ENCODE measurements at regions of chr17 and their contacts with region 1.

Region 1: GRCh38 chr17:72556944-72557826 is 436.4 kb downstream of the SOX9 start:
- DNase-seq: no peak
- H3K4me3 ChIP-seq: no peak overlapping the region
- CTCF ChIP-seq: peak; percentile 84

Region 2: GRCh38 chr17:70767102-70767701 is 1790.0 kb before region 1 on chr17:
- CTCF ChIA-PET with region 1: interaction called, 16 read pairs
- POLR2A ChIA-PET with region 1: no interaction called
- DNase-seq: no peak
- H3K4me3 ChIP-seq: no peak overlapping the region
- CTCF ChIP-seq: peak; percentile 36

Region 3: GRCh38 chr17:72580321-72581127 is 23.3 kb after region 1 on chr17:
- CTCF ChIA-PET with region 1: interaction called, 78 read pairs
- POLR2A ChIA-PET with region 1: no interaction called
- DNase-seq: no peak
- H3K4me3 ChIP-seq: no peak overlapping the region
- CTCF ChIP-seq: no peak

Region 4: GRCh38 chr17:72614871-72615626 is 57.9 kb after region 1 on chr17:
- CTCF ChIA-PET with region 1: interaction called, 10 read pairs
- POLR2A ChIA-PET with region 1: no interaction called
- DNase-seq: no peak
- H3K4me3 ChIP-seq: no peak overlapping the region
- CTCF ChIP-seq: no peak

Region 5: GRCh38 chr17:72699545-72699944 is 142.4 kb after region 1 on chr17:
- CTCF ChIA-PET with region 1: interaction called, 18 read pairs
- POLR2A ChIA-PET with region 1: no interaction called
- DNase-seq: no peak
- H3K4me3 ChIP-seq: no peak overlapping the region
- CTCF ChIP-seq: no peak

Region 6: DNA sequence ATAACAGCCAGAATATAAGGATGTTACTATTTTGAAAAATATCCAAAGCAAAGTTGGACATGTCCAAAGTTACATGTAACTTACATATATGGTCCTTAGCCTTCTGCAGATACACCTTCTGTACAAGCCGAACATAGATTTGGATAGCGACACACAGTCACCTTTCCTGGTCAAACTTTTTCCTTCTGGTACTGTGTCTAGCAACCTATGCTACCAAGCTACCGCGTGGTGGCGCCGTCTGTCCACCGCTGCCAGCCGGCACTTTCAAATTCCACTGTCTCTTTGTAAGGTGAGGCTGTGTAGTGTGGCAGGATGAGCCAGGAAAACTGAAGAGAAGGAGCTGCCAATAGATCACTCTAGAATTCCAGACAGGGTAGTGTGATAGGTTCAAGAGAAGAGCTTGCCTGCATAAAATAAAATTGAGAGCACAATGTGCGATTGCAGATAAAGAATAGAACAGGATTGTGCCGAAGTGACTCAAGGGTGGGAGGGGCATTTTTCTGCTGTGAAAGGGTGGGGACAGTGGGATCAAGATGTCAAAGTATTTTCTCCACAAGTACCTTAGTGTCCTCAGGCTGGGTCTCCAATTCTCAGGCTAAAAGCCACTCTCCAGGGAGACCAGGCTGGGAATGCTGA is 168.4 kb after region 1 on chr17:
- CTCF ChIA-PET with region 1: interaction called, 350 read pairs
- POLR2A ChIA-PET with region 1: no interaction called
- DNase-seq: no peak
- H3K4me3 ChIP-seq: no peak overlapping the region
- CTCF ChIP-seq: peak; percentile 90

Region 7: GRCh38 chr17:72839131-72839725 is 282.0 kb after region 1 on chr17:
- CTCF ChIA-PET with region 1: no interaction called
- POLR2A ChIA-PET with region 1: no interaction called
- DNase-seq: no peak
- H3K4me3 ChIP-seq: no peak overlapping the region
- CTCF ChIP-seq: no peak

Region 8: DNA sequence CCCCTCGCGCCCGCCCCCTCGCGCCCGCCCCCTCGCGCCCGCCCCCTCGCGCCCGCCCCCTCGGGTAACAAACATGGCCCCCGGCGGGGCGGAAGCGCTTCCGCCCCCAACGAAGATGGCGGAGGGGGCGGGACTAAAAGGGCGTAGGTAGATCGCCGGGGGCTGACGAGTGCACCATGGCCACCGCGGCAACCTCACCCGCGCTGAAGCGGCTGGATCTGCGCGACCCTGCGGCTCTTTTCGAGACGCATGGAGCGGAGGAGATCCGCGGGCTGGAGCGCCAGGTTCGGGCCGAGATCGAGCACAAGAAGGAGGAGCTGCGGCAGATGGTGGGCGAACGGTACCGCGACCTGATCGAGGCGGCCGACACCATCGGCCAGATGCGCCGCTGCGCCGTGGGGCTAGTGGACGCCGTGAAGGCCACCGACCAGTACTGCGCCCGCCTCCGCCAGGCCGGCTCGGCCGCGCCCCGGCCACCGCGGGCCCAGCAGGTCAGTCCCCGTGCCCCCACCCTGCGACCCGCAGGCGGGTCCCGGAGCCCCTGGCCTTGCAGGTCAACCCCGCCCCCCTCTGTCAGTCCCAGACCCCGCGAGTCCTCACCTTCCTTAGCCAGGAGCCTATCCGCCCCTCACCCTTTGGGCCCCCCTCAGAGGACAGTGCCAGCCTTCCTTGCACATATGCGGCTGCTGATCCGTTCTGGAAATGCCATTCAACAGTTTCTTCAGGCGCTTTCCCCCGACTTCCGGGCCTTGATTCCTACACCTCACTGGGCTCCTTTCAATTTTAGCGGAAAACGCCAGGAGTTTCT is 635.9 kb after region 1 on chr17 and contains the start of gene COG1:
- CTCF ChIA-PET with region 1: interaction called, 155 read pairs
- POLR2A ChIA-PET with region 1: no interaction called
- DNase-seq: no peak
- H3K4me3 ChIP-seq: peak within 1 kb of the TSS; percentile 93
- CTCF ChIP-seq: no peak